Esophagus muscularis mucosa (tissue), 4 donors: ENCODE measurements at regions of chr22 and their contacts with region 1.

Region 1: DNA sequence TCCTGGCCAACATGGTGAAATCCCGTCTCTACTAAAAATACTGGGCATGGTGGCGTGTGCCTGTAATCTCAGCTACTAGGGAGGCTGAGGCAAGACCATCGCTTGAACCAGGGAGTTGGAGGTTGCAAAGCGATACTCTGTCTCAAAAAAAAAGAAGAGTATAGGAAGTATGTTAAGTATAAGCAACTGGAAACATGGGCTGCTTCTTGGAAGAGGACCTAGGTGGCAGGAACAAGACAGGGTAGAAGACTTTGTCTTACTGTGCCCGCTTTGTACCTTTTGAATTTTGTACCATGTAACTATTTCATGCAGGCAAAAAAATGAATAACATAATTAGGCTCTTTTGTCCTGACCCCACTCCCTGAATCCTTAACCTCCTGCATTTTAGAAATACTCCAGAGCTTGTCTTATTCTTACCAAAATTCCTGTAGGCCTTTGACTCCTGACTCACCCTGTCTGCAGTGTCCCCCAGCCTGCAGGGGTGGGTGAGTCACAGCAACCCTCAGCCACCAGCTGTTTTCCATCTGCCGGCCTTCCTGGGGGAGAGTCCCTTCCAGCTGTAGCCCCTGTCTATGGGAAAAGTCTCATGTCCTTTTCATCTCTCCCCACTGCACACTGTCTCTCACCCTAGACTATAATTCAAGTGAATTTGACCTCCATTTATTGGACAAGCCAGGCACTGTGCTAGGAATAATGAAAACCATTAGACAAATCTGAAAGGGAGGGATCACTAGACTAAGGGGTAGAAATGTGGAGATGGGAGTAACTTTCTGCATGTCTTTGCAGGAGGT is 41.8 kb downstream of the TXN2 start:
- DNase-seq: no peak
- H3K4me3 ChIP-seq: no peak overlapping the region
- H3K27ac ChIP-seq: peak overlapping the region in 2 of 4 donors; percentile 6 to 39
- H3K4me1 ChIP-seq: peaks cover 2 to 30% (median 16%) of the 10 kb centered on the region in 4 donors
- H3K27me3 ChIP-seq: no peaks in the 10 kb centered on the region
- CTCF ChIP-seq: no peak
- EP300 ChIP-seq: no peak
- POLR2A ChIP-seq: no peak

Region 2: DNA sequence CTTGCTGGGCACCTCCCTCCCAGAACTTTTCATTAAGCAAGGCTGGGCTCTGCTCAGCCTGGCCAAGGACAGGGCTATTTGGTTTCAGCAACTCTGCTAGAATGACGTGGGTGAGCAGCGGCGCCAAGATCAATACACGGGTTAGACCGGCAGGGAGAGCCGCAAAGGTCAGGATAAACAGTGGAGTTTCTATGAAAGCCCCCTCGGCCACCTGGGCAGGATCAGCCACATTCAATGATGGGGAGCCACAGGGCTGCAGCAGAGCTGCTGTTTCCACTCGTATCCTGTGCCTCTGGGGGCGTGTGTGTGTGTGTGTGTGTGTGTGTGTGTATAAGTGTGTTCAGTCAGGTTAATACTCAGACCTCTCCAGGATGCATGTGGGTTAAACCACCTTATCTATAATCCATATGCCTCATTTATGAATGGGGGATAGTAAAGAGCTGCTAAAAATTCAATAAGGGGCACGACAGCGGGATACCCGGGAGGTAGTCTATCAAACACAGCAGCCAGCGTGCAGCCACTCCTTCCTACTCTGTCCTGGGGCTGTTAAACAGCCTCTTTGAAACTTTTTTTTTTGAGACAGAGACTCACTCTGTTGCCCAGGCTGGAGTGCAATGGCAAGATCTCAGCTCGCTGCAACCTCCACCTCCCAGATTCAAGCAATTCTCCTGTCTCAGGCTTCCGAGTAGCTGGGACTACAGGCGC is 86.7 kb before region 1 on chr22:
- intact Hi-C with region 1: no loop called
- DNase-seq: no peak
- H3K4me3 ChIP-seq: peak overlapping the region in 3 of 4 donors; percentile 9 to 33 (median 12)
- H3K27ac ChIP-seq: peak overlapping the region; percentile 95 to 100 (median 98)
- H3K4me1 ChIP-seq: peaks cover 99 to 100% (median 99%) of the 10 kb centered on the region in 4 donors
- H3K27me3 ChIP-seq: no peaks in the 10 kb centered on the region
- CTCF ChIP-seq: no peak
- EP300 ChIP-seq: no peak
- POLR2A ChIP-seq: no peak

Region 3: DNA sequence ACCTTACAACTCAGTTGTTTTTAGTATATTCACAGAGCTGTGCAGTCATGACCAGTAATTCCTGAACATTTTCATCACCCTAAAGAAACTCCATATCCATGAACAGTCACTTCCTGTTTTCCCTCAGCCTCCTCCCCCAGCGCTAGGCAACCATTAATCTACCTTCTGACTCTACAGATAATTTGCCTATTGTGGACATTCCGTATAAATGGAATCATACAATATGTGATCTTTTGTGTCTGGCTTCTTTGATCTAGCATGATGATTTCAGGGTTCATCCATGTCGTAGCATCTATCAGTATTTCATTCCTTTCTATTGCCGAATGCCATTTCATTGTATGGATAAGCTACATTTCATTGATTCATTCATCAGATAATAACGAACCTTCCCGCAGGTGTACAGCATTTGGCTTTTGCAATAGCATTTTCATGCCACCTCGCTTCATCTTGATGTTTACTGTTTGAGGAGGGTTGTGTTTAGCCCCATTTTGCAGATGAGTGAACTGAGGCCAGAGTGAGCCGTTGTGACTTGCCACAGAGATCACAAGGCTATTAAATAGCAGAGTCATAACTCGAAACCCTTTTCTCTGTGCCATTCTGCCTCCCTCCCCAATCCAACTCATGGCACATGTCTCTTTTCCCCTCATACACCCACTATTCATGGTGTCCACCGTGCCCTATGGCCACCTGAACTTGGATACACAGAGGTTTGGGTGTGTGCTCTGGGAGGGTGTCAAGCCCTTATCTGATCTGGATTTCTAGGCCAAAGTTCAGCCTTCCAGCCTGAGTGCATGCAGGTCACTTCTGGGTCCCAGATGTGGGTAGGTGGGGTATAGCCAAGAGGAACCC is 40.8 kb before region 1 on chr22:
- intact Hi-C with region 1: loop called (anchors 10 kb)
- DNase-seq: no peak
- H3K4me3 ChIP-seq: no peak overlapping the region
- H3K27ac ChIP-seq: no peak overlapping the region
- H3K4me1 ChIP-seq: peaks cover 0 to 4% (median 0%) of the 10 kb centered on the region in 4 donors
- H3K27me3 ChIP-seq: no peaks in the 10 kb centered on the region
- CTCF ChIP-seq: no peak
- EP300 ChIP-seq: no peak
- POLR2A ChIP-seq: no peak